Caco-2 (cell line): ENCODE measurements at regions of chr2 and their contacts with region 1.

Region 1: DNA sequence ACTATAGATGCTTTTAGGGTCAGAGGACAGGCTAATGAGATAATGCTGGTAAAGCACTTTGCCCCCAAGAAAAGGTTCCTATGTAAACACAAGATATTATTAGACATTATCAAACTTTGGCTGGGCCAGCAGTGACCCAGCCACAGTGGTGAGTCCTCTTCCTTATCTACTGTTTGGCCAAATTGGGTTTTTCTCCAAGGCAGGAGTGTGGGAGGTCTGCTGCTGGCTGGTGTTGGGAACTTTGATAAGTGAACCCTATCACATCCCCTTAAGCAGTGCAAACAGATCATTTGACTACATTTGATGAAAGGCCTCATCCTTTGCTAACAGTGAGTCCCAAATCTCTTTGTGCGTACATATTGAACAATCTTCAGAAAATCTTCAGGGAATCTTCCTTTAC is 16.2 kb downstream of the FZD7 start:
- DNase-seq: peak; percentile 59 to 82
- H3K4me3 ChIP-seq: no peak overlapping the region
- H3K4me3 Mint-ChIP-seq: peak overlapping the region; percentile 17
- H3K27ac Mint-ChIP-seq: peak overlapping the region; percentile 30
- H3K4me1 ChIP-seq: peaks cover 71% of the 10 kb centered on the region
- H3K4me1 Mint-ChIP-seq: peaks cover 54% of the 10 kb centered on the region
- H3K27me3 ChIP-seq: no peaks in the 10 kb centered on the region
- H3K27me3 Mint-ChIP-seq: no peaks in the 10 kb centered on the region
- CTCF ChIP-seq: no peak

Region 2: DNA sequence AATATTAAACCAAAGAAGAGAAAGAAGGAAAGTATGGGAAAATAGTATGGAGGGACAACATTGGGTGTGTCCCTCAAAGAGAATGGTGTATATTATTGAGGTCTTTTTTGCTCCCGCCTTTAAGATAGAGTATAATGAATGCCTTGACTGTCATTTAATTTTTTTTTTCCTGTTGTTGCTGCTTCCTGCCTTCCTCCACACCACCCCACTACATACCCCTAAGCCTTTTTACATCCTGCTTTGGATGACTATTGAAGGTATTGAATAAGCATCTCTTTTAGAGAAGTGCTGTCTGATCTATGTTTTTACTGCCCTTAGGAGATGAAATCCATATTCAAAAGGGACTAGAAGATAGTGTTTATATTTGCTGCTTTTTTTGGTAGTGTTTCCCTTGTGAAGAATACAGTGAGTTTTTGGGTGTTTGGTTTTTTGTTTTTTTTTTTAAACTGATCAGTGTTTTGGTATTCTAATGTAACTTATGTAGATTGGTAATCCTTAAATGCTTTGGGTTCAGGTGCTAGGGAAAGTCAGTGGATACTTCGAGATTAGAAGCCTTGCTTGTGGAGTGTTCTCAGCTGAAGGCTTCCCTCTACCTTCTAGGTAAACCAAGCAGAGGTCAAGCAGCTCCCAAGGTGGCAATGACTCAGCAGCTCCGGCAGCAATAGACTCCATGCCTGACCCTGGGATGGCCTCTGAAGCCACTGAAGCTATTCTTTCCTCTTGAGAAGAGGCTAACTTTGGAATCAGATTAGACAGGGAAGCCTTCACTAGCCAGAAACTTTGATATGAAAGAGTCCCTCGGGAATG is 11.2 kb before region 1 on chr2:
- CTCF ChIA-PET with region 1: no interaction called
- POLR2A ChIA-PET with region 1: interaction called, 3 read pairs
- intact Hi-C with region 1: loop called (anchors 1 kb)
- DNase-seq: peak; percentile 65 to 84
- H3K4me3 ChIP-seq: no peak overlapping the region
- H3K4me3 Mint-ChIP-seq: peak overlapping the region; percentile 42
- H3K27ac Mint-ChIP-seq: peak overlapping the region; percentile 93
- H3K4me1 ChIP-seq: peaks cover 55% of the 10 kb centered on the region
- H3K4me1 Mint-ChIP-seq: peaks cover 31% of the 10 kb centered on the region
- H3K27me3 ChIP-seq: no peaks in the 10 kb centered on the region
- H3K27me3 Mint-ChIP-seq: no peaks in the 10 kb centered on the region
- CTCF ChIP-seq: no peak

Region 3: GRCh38 chr2:202096736-202097135 is 46.9 kb after region 1 on chr2:
- CTCF ChIA-PET with region 1: no interaction called
- POLR2A ChIA-PET with region 1: no interaction called
- intact Hi-C with region 1: no loop called
- DNase-seq: no peak
- H3K4me3 ChIP-seq: no peak overlapping the region
- H3K4me3 Mint-ChIP-seq: no peak overlapping the region
- H3K27ac Mint-ChIP-seq: no peak overlapping the region
- H3K4me1 ChIP-seq: no peaks in the 10 kb centered on the region
- H3K4me1 Mint-ChIP-seq: no peaks in the 10 kb centered on the region
- H3K27me3 ChIP-seq: no peaks in the 10 kb centered on the region
- H3K27me3 Mint-ChIP-seq: no peaks in the 10 kb centered on the region
- CTCF ChIP-seq: no peak

Region 4: GRCh38 chr2:202149155-202149762 is 99.4 kb after region 1 on chr2:
- CTCF ChIA-PET with region 1: no interaction called
- POLR2A ChIA-PET with region 1: no interaction called
- intact Hi-C with region 1: no loop called
- DNase-seq: no peak
- H3K4me3 ChIP-seq: no peak overlapping the region
- H3K4me3 Mint-ChIP-seq: no peak overlapping the region
- H3K27ac Mint-ChIP-seq: no peak overlapping the region
- H3K4me1 ChIP-seq: peaks cover 3% of the 10 kb centered on the region; the same call in 1 of the 2 replicates
- H3K4me1 Mint-ChIP-seq: peaks cover 7% of the 10 kb centered on the region
- H3K27me3 ChIP-seq: no peaks in the 10 kb centered on the region
- H3K27me3 Mint-ChIP-seq: no peaks in the 10 kb centered on the region
- CTCF ChIP-seq: no peak